ENCODE measurements at regions of chr17 and their contacts with region 1.

Region 1: GRCh38 chr17:39754161-39754951 is 16.6 kb downstream of the GRB7 start:
- DNase-seq: peak; percentile 94 to 99 (median 98)
- ATAC-seq: peak; percentile 73 to 83
- H3K4me3 Mint-ChIP-seq: peak overlapping the region; percentile 68 to 91 (median 82)
- H3K27ac Mint-ChIP-seq: peak overlapping the region; percentile 19 to 99 (median 96)
- H3K4me1 Mint-ChIP-seq: peaks cover 27 to 61% (median 56%) of the 10 kb centered on the region in 4 donors
- H3K27me3 Mint-ChIP-seq: no peaks in the 10 kb centered on the region

Region 2: DNA sequence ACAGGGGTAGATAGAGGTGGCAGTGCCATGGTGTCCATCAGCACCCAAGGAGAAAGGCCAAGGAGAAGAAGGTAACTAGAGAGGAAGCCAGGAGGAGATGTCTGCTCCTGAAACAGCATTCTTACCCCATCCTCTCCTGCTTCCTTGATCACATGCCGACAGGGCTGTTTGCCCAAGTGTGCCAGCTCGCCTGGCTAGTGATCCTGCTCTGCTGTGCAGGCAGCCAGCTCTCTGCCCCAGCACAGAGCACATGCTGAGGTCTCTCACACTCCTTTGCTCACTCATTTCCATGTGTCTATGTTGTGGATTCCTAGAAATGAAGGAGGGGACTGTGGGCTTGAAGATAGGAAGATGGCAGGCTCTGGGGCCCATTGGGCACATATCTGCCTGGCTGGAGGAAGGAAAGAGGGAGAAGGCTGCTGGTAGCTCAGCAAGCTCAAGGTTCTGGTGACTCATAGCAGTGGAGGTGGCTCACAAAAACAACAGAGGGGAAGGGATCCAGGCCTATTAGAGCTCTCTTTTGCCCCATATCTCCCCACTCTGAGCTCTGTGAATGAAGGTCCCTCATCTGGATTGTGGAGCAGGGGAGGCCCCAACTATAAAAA is 200.9 kb before region 1 on chr17:
- POLR2A ChIA-PET with region 1: no interaction called
- DNase-seq: no peak
- ATAC-seq: no peak
- H3K4me3 Mint-ChIP-seq: no peak overlapping the region
- H3K27ac Mint-ChIP-seq: peak overlapping the region in 1 of 10 donors; percentile 37
- H3K4me1 Mint-ChIP-seq: peaks cover 0 to 26% (median 2%) of the 10 kb centered on the region in 4 donors
- H3K27me3 Mint-ChIP-seq: no peaks in the 10 kb centered on the region

Region 3: DNA sequence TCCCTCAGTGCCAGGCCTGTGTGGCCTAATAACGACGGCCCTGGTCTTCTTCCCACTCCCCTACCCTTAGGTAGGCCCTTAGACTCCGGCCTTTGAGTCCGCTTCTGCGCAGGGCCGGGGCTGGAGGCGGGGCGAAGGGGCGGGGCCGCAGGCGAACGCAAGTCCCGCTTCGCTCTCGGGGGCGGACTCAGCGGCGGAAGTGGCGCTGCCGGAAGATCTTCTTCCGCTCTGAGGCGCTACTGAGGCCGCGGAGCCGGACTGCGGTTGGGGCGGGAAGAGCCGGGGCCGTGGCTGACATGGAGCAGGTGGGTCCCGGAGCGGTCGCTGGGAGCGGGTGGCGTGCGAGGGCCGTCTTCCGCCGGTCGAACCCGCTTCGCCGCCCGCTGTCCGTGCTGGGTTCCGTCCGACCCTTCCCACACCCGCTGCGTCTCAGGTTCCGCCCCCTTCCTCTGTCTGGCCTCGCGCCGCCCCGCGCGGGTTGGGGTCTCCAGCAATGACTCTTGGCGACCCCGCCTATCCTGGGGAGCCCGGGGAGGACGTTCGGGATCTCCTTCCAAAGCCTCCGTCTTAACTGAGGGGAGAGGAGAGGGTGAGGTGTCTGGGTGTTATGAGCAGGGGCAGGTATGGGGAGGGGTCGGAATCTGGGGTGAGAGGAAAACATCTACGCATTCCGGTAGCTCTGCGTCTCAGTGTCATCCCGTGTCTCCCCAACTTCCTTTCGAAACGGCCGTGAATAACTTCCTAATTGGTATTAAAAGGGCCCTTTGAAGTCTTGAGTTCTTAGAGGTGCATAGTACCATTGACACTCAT is 117.2 kb before region 1 on chr17 and contains the start of gene STARD3:
- POLR2A ChIA-PET with region 1: interaction called, 10 read pairs
- DNase-seq: peak; percentile 79 to 93 (median 86)
- ATAC-seq: peak; percentile 88 to 90
- H3K4me3 Mint-ChIP-seq: peak within 1 kb of the TSS; percentile 88 to 97 (median 94)
- H3K27ac Mint-ChIP-seq: peak within 1 kb of the TSS; percentile 80 to 96 (median 93)
- H3K4me1 Mint-ChIP-seq: peaks cover 40 to 68% (median 67%) of the 10 kb centered on the region in 4 donors
- H3K27me3 Mint-ChIP-seq: peaks cover 0 to 1% (median 0%) of the 10 kb centered on the region in 5 donors
- polyA plus RNA-seq, gene STARD3: 37.4 to 51.6 (median 43.0) TPM

Region 4: DNA sequence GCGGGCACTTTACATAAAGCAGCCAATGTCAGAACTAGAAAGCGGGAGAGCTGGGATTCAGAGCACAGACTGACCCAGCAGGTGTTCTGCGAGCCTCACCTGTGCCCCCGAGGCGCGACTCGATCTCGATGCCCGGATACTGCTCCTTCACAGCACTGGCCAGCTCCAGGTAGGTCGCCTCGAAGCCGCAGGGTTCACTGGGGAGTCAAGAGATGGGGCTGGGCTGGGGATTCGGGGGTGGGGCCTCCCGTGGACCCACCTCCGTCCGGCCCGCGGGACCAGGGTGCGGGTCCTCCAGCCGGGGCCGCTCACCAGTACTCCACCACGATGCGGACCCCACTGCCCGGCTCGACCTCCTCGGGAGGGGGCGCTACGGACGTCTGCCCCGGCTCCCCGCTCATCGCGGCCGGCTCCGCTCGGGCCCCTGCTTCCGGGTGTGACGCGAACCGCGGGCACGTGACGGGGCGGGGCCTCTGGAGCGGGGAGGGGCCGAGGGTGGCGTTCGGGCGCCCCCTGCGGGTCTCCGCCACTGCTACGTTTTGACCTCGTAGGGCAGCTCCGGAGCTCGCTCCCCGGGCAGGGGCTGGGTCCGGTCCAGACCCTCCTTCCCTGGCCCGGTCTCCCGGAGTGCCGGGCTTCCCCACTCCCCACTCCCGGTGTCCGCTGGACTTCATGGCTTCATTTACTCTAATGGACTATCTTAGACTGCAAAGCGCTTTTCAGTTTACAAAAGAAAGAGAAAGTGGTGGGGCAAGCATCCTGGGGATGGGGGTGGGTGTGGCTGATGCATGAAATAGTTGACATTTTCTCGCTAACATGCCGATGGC is 24.0 kb before region 1 on chr17 and contains the start of gene MIEN1:
- POLR2A ChIA-PET with region 1: interaction called, 46 read pairs
- DNase-seq: peak; percentile 85 to 99 (median 95)
- ATAC-seq: peak; percentile 86 to 93
- H3K4me3 Mint-ChIP-seq: peak within 1 kb of the TSS; percentile 85 to 95 (median 91)
- H3K27ac Mint-ChIP-seq: peak within 1 kb of the TSS; percentile 82 to 97 (median 94)
- H3K4me1 Mint-ChIP-seq: peaks cover 9 to 26% (median 24%) of the 10 kb centered on the region in 4 donors
- H3K27me3 Mint-ChIP-seq: no peaks in the 10 kb centered on the region
- polyA plus RNA-seq, gene MIEN1: 75.6 to 81.6 (median 76.7) TPM

Region 5: DNA sequence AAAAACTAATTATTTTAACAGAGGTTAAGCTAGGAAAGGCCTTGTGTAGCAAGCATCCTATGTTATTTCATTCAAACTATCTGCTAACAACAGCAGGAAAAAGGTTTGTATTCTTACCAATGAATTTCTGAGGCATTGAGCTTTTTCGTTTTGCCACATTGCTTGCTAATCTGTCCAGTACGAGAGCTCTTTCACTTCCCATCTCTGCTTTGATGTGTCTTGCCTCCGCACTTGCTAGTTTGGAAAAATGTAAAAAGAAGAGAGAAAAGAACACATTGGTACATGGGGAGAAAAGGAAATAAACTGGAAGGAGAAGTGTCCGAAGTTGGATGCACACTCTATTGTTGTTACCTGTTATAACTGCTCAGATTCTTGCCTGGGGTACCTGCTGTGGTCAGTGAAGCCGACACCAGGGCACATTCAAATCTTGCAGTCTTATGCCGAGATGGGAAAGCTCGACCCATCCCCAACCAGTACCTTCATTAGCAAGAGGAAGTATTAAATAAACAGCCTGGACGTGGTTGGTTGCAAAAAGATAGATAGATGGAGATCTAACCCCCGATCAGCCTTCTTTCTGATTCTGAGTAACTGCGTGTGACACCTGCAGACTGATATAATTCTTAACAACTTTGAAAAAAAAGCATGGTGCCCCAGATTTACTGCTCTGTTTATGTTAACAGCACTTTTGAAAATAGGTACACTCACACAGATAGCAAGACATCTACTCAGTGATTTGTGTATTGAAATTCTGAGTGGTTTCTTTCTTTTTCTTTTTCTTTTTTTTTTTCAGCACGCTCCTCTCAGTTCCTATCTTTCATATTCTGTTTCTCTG is 23.4 kb after region 1 on chr17:
- POLR2A ChIA-PET with region 1: interaction called, 41 read pairs
- DNase-seq: peak in 2 of 10 donors; percentile 35 to 41
- ATAC-seq: peak; percentile 61 to 67
- H3K4me3 Mint-ChIP-seq: peak overlapping the region; percentile 81 to 96 (median 91)
- H3K27ac Mint-ChIP-seq: peak overlapping the region; percentile 89 to 100 (median 95)
- H3K4me1 Mint-ChIP-seq: peaks cover 48 to 91% (median 85%) of the 10 kb centered on the region in 4 donors
- H3K27me3 Mint-ChIP-seq: no peaks in the 10 kb centered on the region

Region 6: GRCh38 chr17:39813631-39814030 is 59.3 kb after region 1 on chr17:
- POLR2A ChIA-PET with region 1: interaction called, 47 read pairs
- DNase-seq: peak; percentile 33 to 84 (median 71)
- ATAC-seq: peak; percentile 93 to 97
- H3K4me3 Mint-ChIP-seq: peak overlapping the region; percentile 71 to 87 (median 79)
- H3K27ac Mint-ChIP-seq: peak overlapping the region; percentile 89 to 98 (median 95)
- H3K4me1 Mint-ChIP-seq: peaks cover 32 to 84% (median 75%) of the 10 kb centered on the region in 4 donors
- H3K27me3 Mint-ChIP-seq: no peaks in the 10 kb centered on the region

Region 7: GRCh38 chr17:39863918-39864746 is 109.8 kb after region 1 on chr17 and contains the start of gene IKZF3:
- POLR2A ChIA-PET with region 1: interaction called, 87 read pairs
- DNase-seq: peak; percentile 71 to 87 (median 80)
- ATAC-seq: peak; percentile 75 to 85
- H3K4me3 Mint-ChIP-seq: peak within 1 kb of the TSS; percentile 92 to 99 (median 96)
- H3K27ac Mint-ChIP-seq: peak within 1 kb of the TSS; percentile 96 to 98 (median 98)
- H3K4me1 Mint-ChIP-seq: peaks cover 26 to 74% (median 64%) of the 10 kb centered on the region in 4 donors
- H3K27me3 Mint-ChIP-seq: no peaks in the 10 kb centered on the region
- polyA plus RNA-seq, gene IKZF3: 18.8 to 59.2 (median 21.5) TPM

Region 8: GRCh38 chr17:39980351-39981206 is 226.2 kb after region 1 on chr17 and contains the start of gene PSMD3:
- POLR2A ChIA-PET with region 1: interaction called, 13 read pairs
- DNase-seq: peak; percentile 90 to 99 (median 98)
- ATAC-seq: peak; percentile 90 to 94
- H3K4me3 Mint-ChIP-seq: peak within 1 kb of the TSS; percentile 91 to 96 (median 94)
- H3K27ac Mint-ChIP-seq: peak within 1 kb of the TSS; percentile 90 to 98 (median 96)
- H3K4me1 Mint-ChIP-seq: peaks cover 21 to 48% (median 39%) of the 10 kb centered on the region in 4 donors
- H3K27me3 Mint-ChIP-seq: no peaks in the 10 kb centered on the region
- polyA plus RNA-seq, gene PSMD3: 45.4 to 55.9 (median 51.5) TPM